Dorsolateral prefrontal cortex (tissue), 120 donors: ENCODE measurements at regions of chr1 and their contacts with region 1.

Region 1: DNA sequence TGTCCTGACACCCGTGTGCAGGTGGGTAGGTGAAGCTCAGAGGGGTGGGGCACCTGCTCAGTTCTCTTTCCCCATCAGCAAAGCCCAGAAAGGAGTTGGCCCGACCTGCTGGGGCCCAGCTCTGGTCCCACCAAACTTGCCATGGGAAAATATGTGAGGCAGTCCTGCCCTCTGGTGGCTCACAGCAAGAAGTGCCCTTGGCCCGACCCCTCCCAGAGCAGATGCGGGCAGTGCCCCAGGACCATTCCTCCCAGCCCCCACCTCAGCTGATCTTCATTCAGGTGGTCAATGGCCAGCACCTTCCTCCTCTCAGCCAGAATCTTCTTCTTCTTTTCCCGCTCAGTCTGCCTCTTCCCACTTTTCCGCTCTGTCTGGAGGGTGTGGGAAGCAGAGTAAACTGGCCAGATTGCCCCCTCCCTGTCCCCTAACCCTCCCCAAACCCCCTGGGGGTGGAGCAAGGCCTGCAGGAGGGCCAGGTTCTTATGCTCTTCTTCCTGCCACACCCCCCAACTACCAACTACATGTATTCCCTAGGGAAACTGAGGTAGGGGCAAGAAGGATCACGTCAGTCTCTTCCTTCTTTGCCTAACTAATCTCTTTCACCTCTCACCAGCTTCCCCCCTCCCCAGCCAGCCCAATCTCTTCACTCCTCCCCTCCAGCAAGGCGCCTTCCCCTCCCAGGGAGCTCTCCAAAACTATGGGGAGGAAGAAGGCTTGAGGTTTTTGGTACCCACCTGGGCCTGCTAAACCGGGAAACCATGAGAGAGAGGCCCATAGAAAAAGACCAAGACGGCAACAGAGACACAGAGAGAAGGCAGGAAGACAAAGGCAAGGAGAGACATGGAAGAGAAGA is 15.6 kb downstream of the TNNT2 start:
- DNase-seq: peak in 7 of 10 donors; percentile 27 to 57 (median 46)
- H3K4me3 ChIP-seq: no peak overlapping the region
- H3K27ac ChIP-seq: no peak overlapping the region
- H3K27me3 ChIP-seq: no peaks in the 10 kb centered on the region
- CTCF ChIP-seq: peak; percentile 39 to 93 (median 82)

Region 2: DNA sequence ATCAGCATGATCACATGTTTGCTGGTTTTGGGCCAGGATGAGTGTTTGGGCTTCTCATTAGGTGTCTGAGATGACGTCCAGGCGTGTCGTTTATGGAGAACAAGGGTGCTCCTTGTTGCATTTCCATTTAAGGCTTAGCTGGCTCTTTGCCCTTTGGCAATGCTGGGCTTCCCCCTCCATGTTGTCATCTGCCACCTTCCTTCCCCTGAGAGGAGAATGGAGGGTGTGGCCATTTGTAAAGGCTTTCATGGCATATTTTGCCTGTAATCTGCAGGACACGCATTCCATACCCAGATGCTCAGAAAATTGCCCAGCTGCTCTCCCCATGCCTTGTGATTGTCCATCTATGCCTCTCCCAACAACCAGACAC is 50.9 kb before region 1 on chr1:
- intact Hi-C with region 1: loop called in 1 of 2 experiments (anchors 2 kb)
- DNase-seq: peak in 1 of 10 donors; percentile 15
- H3K4me3 ChIP-seq: no peak overlapping the region
- H3K27ac ChIP-seq: peak overlapping the region in 5 of 59 donors; percentile 5 to 45 (median 21)
- H3K27me3 ChIP-seq: peaks cover 0 to 6% (median 0%) of the 10 kb centered on the region in 45 donors
- CTCF ChIP-seq: no peak